ENCODE measurements at regions of chr16 and their contacts with region 1.

Region 1: GRCh38 chr16:1119766-1120576 is 23.9 kb upstream of the C1QTNF8 start:
- DNase-seq: no peak
- ATAC-seq: no peak

Region 2: GRCh38 chr16:1019231-1020090 is 100.5 kb before region 1 on chr16:
- intact Hi-C with region 1: no loop called
- DNase-seq: no peak
- ATAC-seq: no peak

Region 3: GRCh38 chr16:1194665-1195392 is 74.9 kb after region 1 on chr16:
- intact Hi-C with region 1: loop called in 1 of 2 experiments (anchors 10 kb)
- DNase-seq: no peak
- ATAC-seq: peak; percentile 25

Region 4: GRCh38 chr16:1237990-1238389 is 118.0 kb after region 1 on chr16:
- intact Hi-C with region 1: no loop called
- DNase-seq: no peak
- ATAC-seq: no peak

Measured in left colon (tissue), 2 donors.